A549 (cell line): ENCODE measurements at regions of chr6 and their contacts with region 1.

Region 1: GRCh38 chr6:13328076-13328874 is at the start of gene TBC1D7:
- DNase-seq: peak; percentile 62 to 91
- ATAC-seq: peak; percentile 93 to 96
- H3K4me3 ChIP-seq: peak within 1 kb of the TSS; percentile 67
- H3K27ac ChIP-seq: peak within 1 kb of the TSS; percentile 90 to 99
- H3K4me1 ChIP-seq: peaks cover 16% of the 10 kb centered on the region; the same call in 1 of the 3 replicates
- CTCF ChIP-seq: no peak
- EP300 ChIP-seq: no peak
- POLR2A ChIP-seq: peak; percentile 78
- RAD21 ChIP-seq: no peak
- polyA plus RNA-seq, gene TBC1D7: 55.9 and 78.3 TPM in 2 replicates

Region 2: GRCh38 chr6:12911387-12911960 is 416.8 kb before region 1 on chr6:
- CTCF ChIA-PET with region 1: interaction called, 22 read pairs
- POLR2A ChIA-PET with region 1: interaction called, 14 read pairs
- DNase-seq: peak; percentile 2 to 19
- ATAC-seq: no peak
- H3K4me3 ChIP-seq: no peak overlapping the region
- H3K27ac ChIP-seq: no peak overlapping the region
- H3K4me1 ChIP-seq: no peaks in the 10 kb centered on the region
- CTCF ChIP-seq: peak; percentile 47
- EP300 ChIP-seq: no peak
- POLR2A ChIP-seq: no peak
- RAD21 ChIP-seq: peak; percentile 53 to 61

Region 3: GRCh38 chr6:13194852-13195251 is 133.4 kb before region 1 on chr6:
- CTCF ChIA-PET with region 1: interaction called, 35 read pairs
- POLR2A ChIA-PET with region 1: interaction called, 9 read pairs
- DNase-seq: peak; percentile 55 to 63
- ATAC-seq: peak; percentile 73 to 77; a peak in 4 of 6 replicates
- H3K4me3 ChIP-seq: no peak overlapping the region
- H3K27ac ChIP-seq: no peak overlapping the region
- H3K4me1 ChIP-seq: no peaks in the 10 kb centered on the region
- CTCF ChIP-seq: peak; percentile 59
- EP300 ChIP-seq: no peak
- POLR2A ChIP-seq: no peak
- RAD21 ChIP-seq: peak; percentile 65 to 67

Region 4: DNA sequence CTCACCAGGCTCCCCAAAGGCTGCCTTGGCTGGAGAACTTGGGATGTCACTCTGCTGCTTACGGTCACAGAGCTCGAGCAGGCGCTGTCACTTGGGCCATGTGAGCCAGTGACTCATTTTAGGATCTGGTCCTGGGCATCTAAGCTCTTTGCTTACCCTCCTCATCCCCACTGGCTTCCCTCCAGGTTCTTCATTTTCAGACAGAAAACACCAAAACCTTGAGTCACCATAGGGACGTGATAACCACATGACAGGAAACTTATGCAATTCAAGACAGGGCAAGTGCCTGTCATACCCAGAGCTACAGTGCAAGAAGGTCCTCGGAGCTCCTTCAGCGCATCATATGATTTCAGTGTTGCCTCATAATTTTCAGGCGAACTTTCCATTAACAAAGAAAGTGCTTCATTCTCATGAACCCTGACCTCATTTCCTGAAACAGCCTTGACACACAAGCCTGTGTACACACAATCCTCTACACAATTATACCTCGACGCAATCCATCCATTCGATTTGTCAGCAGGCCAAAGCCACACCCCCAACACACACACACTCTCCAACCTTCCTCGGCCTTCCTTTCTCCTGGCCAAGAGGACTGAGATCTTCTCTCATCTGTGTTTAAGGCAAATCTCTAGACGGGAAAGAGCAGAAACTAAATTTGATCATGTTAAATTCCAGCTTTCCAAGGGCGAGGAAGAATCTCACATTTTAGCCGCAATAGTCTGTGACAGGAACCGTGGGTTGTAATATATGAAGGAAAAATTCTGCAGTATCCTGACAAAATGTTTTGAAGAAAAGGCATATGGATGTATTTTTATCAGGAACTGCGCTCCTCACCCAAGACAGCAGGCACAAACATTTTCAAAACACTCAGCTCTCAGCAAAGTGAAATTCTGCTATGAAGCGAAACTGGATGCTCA is 25.3 kb before region 1 on chr6:
- CTCF ChIA-PET with region 1: interaction called, 5 read pairs
- POLR2A ChIA-PET with region 1: interaction called, 28 read pairs
- DNase-seq: peak; percentile 88 to 89
- ATAC-seq: peak; percentile 87 to 93
- H3K4me3 ChIP-seq: no peak overlapping the region
- H3K27ac ChIP-seq: peak overlapping the region; percentile 87 to 94
- H3K4me1 ChIP-seq: peaks cover 62% of the 10 kb centered on the region
- CTCF ChIP-seq: no peak
- EP300 ChIP-seq: peak; percentile 90 to 91; a peak in 4 of 5 replicates
- POLR2A ChIP-seq: no peak
- RAD21 ChIP-seq: peak in 1 of 2 experiments; percentile 20; a peak in 1 of 5 replicates

Region 5: DNA sequence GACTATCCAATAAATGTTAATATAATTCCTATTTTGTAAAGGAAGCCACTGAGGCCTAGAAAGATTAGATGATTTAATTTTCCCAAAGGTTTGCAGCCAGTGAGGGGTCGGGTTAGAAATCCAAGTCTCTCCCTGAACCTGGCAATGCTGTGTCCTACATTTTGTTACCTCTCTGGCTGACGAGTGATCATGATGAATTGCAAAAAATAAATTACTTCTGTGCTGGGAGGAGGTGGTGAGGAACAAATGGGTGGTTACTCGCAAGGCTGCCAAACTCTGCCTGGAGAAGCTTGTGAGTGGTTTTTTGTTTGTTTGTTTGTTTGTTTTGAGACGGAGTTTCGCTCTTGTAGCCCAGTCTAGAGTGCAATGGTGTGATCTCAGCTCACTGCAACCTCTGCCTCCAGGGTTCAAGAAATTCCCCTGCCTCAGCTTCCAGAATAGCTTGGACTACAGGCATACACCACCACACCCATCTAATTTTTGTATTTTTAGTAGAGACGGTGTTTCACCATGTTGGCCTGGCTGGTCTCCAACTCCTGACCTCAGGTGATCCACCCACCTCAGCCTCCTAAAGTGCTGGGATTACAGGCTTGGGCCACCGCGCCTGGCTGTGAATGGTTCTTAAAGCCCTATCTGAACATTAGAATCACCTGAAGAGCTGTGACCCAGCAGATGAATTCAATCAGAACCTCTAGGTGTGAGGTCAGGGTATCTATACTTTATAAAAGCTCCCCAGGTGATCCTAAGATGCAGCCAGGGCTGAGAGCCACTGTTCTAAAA is 20.2 kb after region 1 on chr6:
- CTCF ChIA-PET with region 1: no interaction called
- POLR2A ChIA-PET with region 1: no interaction called
- DNase-seq: no peak
- ATAC-seq: no peak
- H3K4me3 ChIP-seq: no peak overlapping the region
- H3K27ac ChIP-seq: no peak overlapping the region
- H3K4me1 ChIP-seq: no peaks in the 10 kb centered on the region
- CTCF ChIP-seq: no peak
- EP300 ChIP-seq: no peak
- POLR2A ChIP-seq: no peak
- RAD21 ChIP-seq: no peak